MCF 10A (cell line): ENCODE measurements at regions of chr10 and their contacts with region 1.

Region 1: DNA sequence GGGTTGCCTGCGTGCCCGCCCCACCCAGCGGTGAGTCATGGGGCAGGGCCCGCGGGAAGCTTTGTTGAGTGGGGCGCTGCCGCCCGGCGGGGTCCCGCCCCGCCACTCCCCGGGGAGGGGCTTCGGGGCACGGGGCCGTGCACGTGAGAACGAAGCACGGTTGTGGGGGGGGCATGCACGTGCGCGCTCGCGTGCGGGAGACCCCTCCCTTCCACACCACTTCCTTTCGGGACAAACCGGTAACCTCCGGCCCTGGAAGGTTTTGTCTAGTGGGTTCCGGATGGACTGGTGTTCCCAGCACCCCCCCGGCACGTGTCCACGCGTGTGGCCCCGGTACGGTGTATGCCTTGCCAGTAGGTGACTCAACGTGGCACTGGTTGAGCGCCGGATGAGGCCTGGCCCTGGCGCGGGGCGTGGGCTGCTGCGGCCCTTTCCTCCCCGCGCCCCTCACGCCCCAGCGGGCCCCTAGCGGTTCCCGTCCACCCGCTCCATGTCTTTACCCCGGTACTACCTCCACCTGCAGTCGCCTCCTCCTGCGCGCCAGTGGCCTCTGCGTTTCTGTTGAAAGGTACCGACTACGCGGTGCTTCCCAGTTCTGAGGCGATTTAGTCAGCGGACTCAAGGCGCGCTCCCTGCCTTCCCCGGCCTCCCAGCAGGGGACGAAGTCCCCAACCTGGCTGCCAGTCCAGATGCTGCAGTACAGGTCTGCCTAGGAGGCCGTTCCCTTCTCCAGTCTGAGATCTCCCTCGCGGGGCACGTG is 3.1 kb downstream of the ADIRF start:
- DNase-seq: peak; percentile 92
- H3K4me3 Mint-ChIP-seq: peak overlapping the region; percentile 77
- H3K27ac Mint-ChIP-seq: peak overlapping the region; percentile 97
- H3K4me1 Mint-ChIP-seq: peaks cover 56% of the 10 kb centered on the region
- H3K27me3 Mint-ChIP-seq: no peaks in the 10 kb centered on the region
- CTCF ChIP-seq: no peak

Region 2: GRCh38 chr10:86603256-86603655 is 368.2 kb before region 1 on chr10:
- CTCF ChIA-PET with region 1: no interaction called
- POLR2A ChIA-PET with region 1: no interaction called
- intact Hi-C with region 1: no loop called
- DNase-seq: no peak
- H3K4me3 Mint-ChIP-seq: no peak overlapping the region
- H3K27ac Mint-ChIP-seq: no peak overlapping the region
- H3K4me1 Mint-ChIP-seq: no peaks in the 10 kb centered on the region
- H3K27me3 Mint-ChIP-seq: no peaks in the 10 kb centered on the region
- CTCF ChIP-seq: no peak

Region 3: DNA sequence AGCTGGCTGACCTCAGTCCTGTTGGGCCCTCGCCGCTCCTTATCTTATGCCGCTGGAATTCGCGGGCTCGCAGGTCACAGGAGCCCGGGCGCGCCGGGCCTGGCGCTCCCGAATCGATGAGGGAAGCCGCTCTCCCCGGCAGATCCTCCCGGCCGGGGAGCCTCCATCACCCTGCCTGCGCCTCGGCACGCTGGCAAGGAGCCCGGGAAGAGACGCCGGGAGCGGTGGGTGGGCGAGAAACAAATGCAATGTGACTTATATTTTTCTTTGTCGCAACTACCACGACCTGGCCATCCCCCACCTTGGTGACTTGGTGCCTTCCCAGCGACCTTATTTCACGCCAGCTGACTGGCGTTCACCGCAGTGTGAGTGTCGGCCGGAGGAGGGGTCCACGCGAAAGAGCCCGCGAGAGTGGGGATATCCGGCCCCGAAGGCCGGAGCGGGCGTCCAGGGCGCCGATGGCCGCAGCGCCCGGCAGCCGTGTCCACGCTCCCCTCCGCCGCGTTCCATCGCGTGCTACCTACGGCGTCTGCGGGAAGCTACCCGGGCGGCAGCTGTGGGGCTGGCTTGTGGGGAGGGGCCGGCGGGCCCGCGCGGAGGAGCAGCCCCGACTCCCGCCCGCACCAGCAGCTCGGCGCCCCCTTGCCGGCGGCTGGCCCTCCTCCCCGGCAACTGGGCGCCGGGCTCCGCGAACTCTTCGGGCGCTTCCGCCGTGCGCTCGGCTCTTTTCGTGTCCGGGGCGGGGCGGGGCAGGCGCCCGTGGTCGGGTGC is 215.5 kb before region 1 on chr10:
- CTCF ChIA-PET with region 1: interaction called, 3 read pairs
- POLR2A ChIA-PET with region 1: interaction called, 14 read pairs
- intact Hi-C with region 1: no loop called
- DNase-seq: peak; percentile 67
- H3K4me3 Mint-ChIP-seq: peak overlapping the region; percentile 84
- H3K27ac Mint-ChIP-seq: peak overlapping the region; percentile 84
- H3K4me1 Mint-ChIP-seq: peaks cover 42% of the 10 kb centered on the region
- H3K27me3 Mint-ChIP-seq: no peaks in the 10 kb centered on the region
- CTCF ChIP-seq: no peak

Region 4: DNA sequence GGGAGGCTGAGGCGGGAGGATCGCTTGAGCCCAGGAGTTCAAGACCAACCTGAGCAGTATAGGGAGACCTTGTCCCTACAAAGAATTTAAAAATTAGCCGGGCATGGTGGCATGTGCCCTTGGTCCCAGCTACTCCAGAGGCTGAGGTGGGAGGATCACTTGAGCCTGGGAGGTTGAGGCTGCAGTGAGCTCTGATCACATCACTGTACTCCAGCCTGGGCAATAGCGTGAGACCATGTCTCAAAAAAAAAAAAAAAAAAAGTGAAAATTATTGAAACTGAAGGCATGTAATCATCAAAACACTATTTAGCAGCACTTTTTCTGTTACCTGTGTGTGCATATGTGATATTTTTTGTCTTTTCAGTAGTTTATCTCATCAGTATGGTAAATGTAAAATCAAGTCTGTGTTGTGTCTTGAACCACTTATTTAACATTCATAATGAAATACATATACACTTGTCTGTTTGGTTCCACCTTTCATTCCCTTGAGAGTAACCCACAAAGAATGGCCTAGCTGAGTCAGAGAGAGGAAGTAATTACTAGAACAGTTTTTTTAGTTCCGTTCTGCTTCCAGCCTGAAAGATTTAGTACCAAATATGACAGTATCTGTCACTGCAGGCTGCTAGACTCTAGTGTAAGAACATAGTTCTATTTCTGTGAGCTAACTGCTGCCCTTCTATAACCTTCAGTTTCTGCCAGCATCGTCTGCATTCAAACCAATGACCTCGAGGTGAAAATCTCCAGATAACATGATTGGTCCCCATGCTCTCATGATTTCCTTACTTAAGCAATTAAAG is 82.6 kb before region 1 on chr10:
- CTCF ChIA-PET with region 1: no interaction called
- POLR2A ChIA-PET with region 1: no interaction called
- intact Hi-C with region 1: no loop called
- DNase-seq: peak; percentile 13
- H3K4me3 Mint-ChIP-seq: no peak overlapping the region
- H3K27ac Mint-ChIP-seq: no peak overlapping the region
- H3K4me1 Mint-ChIP-seq: no peaks in the 10 kb centered on the region
- H3K27me3 Mint-ChIP-seq: no peaks in the 10 kb centered on the region
- CTCF ChIP-seq: no peak

Region 5: GRCh38 chr10:86899670-86900276 is 71.6 kb before region 1 on chr10:
- CTCF ChIA-PET with region 1: no interaction called
- POLR2A ChIA-PET with region 1: no interaction called
- intact Hi-C with region 1: no loop called
- DNase-seq: peak; percentile 75
- H3K4me3 Mint-ChIP-seq: no peak overlapping the region
- H3K27ac Mint-ChIP-seq: no peak overlapping the region
- H3K4me1 Mint-ChIP-seq: no peaks in the 10 kb centered on the region
- H3K27me3 Mint-ChIP-seq: no peaks in the 10 kb centered on the region
- CTCF ChIP-seq: peak; percentile 63

Region 6: DNA sequence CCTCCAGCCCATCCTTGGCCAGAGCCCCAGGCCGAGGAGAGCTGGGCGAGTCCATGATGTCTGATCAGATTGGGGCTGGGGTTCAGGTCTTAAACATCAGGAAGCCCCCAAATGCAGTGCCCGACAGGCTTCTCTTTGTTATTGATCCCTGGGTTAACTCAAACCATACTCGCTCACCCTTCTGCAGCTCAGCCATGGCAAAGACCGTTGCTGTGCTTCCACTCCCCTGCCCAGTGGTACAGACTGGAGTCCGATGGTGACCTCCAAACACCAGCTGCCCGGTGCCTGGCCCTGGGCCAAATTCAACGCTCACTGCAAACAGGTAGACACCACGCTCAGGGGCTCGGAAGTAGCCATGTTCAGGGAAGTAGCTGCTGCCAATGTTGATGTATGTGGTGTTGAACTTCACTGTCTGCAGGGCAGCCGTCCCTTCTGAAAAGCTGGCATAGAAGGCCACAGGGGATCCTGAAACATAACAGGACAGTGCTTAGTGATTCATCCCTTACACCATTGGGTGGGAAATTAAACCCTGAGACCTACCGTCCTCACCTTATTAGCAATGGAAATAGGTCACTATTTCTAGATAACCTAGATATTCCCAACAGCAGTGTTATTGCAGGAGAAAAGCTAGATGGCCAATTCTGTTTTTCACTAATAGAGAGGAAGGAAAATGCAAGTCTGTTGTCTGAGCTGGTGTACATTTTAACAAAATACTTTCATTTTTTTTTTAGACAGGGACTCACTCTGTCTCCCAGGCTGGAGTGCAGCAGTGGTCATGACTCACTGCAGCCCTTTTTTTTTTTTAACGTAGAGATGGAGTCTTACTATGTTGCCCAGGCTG is 34.5 kb before region 1 on chr10:
- CTCF ChIA-PET with region 1: interaction called, 66 read pairs
- POLR2A ChIA-PET with region 1: interaction called, 9 read pairs
- intact Hi-C with region 1: loop called (anchors 2 kb)
- DNase-seq: peak; percentile 25
- H3K4me3 Mint-ChIP-seq: no peak overlapping the region
- H3K27ac Mint-ChIP-seq: no peak overlapping the region
- H3K4me1 Mint-ChIP-seq: peaks cover 2% of the 10 kb centered on the region
- H3K27me3 Mint-ChIP-seq: no peaks in the 10 kb centered on the region
- CTCF ChIP-seq: no peak

Region 7: GRCh38 chr10:86960003-86960862 is 11.2 kb before region 1 on chr10:
- CTCF ChIA-PET with region 1: interaction called, 22 read pairs
- POLR2A ChIA-PET with region 1: interaction called, 43 read pairs
- intact Hi-C with region 1: no loop called
- DNase-seq: peak; percentile 80
- H3K4me3 Mint-ChIP-seq: no peak overlapping the region
- H3K27ac Mint-ChIP-seq: no peak overlapping the region
- H3K4me1 Mint-ChIP-seq: peaks cover 12% of the 10 kb centered on the region
- H3K27me3 Mint-ChIP-seq: no peaks in the 10 kb centered on the region
- CTCF ChIP-seq: peak; percentile 85

Region 8: GRCh38 chr10:87038786-87039185 is 67.4 kb after region 1 on chr10:
- CTCF ChIA-PET with region 1: interaction called, 3 read pairs
- POLR2A ChIA-PET with region 1: interaction called, 52 read pairs
- intact Hi-C with region 1: loop called (anchors 5 kb)
- DNase-seq: peak; percentile 93
- H3K4me3 Mint-ChIP-seq: no peak overlapping the region
- H3K27ac Mint-ChIP-seq: no peak overlapping the region
- H3K4me1 Mint-ChIP-seq: peaks cover 22% of the 10 kb centered on the region
- H3K27me3 Mint-ChIP-seq: no peaks in the 10 kb centered on the region
- CTCF ChIP-seq: no peak

Region 9: GRCh38 chr10:87085537-87085936 is 114.1 kb after region 1 on chr10:
- CTCF ChIA-PET with region 1: interaction called, 3 read pairs
- POLR2A ChIA-PET with region 1: interaction called, 42 read pairs
- intact Hi-C with region 1: no loop called
- DNase-seq: no peak
- H3K4me3 Mint-ChIP-seq: no peak overlapping the region
- H3K27ac Mint-ChIP-seq: peak overlapping the region; percentile 93
- H3K4me1 Mint-ChIP-seq: peaks cover 57% of the 10 kb centered on the region
- H3K27me3 Mint-ChIP-seq: no peaks in the 10 kb centered on the region
- CTCF ChIP-seq: no peak

Region 10: DNA sequence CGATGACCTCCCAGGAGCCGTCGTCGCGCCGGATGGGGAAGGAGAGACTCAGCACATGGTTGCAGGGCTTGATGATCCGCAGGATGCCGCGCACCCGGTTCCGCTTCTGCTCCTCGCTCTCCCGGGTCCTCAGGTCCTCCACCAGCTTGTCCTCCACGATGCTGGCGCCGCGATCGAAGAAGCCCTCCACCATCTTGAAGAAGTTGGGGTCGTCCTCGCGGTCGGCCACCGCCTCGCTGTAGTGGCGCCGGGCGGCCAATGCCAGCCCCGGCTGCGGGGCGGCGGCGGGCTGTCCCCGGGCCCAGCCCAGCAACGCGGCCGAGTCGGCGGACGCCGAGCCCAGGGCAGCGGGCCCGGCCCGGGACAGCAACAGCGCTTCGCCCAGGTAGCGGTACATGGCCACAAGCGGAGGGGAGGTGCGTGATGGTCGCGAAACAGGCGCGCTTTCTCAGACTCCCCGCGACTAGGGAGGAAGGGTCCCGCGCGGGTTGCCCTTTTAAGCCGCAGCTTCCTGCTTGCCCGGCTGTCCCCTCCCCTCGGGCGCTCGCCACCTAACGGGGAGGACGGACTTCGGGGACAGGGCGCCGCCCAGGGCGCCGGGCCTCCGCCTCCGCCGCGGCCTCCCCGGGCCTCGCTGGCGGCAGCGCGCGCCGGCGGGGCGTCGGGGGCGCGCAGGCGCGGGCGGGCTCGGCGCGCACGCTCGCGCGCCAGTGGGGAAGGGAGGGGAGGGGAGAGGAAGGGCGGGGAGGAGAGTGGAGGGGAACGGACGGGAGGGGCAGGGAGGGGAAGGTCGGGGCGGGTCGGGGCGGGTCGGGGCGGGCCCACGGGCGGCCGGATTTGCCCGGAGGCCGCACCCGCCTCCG is 123.2 kb after region 1 on chr10 and contains the starts of genes GLUD1 and SHLD2:
- CTCF ChIA-PET with region 1: interaction called, 3 read pairs
- POLR2A ChIA-PET with region 1: interaction called, 98 read pairs
- intact Hi-C with region 1: loop called (anchors 2 kb)
- DNase-seq: peak; percentile 93
- H3K4me3 Mint-ChIP-seq: peak within 1 kb of the TSS; percentile 74
- H3K27ac Mint-ChIP-seq: peak within 1 kb of the TSS; percentile 61
- H3K4me1 Mint-ChIP-seq: peaks cover 20% of the 10 kb centered on the region
- H3K27me3 Mint-ChIP-seq: no peaks in the 10 kb centered on the region
- CTCF ChIP-seq: no peak
- total RNA-seq, gene GLUD1: 171 and 275 TPM in 2 replicates
- total RNA-seq, gene SHLD2: 28.1 and 31.8 TPM in 2 replicates

Region 11: GRCh38 chr10:87734987-87735827 is 763.8 kb after region 1 on chr10:
- CTCF ChIA-PET with region 1: no interaction called
- POLR2A ChIA-PET with region 1: no interaction called
- intact Hi-C with region 1: no loop called
- DNase-seq: peak; percentile 61
- H3K4me3 Mint-ChIP-seq: no peak overlapping the region
- H3K27ac Mint-ChIP-seq: no peak overlapping the region
- H3K4me1 Mint-ChIP-seq: peaks cover 6% of the 10 kb centered on the region
- H3K27me3 Mint-ChIP-seq: no peaks in the 10 kb centered on the region
- CTCF ChIP-seq: peak; percentile 72